ENCODE measurements at regions of chr5 and their contacts with region 1.

Region 1: GRCh38 chr5:65102828-65103711 is 334.3 kb downstream of the CWC27 start:
- DNase-seq: peak; percentile 51 to 71
- ATAC-seq: peak; percentile 57 to 86 (median 73)
- H3K4me3 ChIP-seq: peak overlapping the region; percentile 81
- H3K27ac ChIP-seq: peak overlapping the region; percentile 74
- H3K4me1 ChIP-seq: peaks cover 4% of the 10 kb centered on the region
- H3K27me3 ChIP-seq: no peaks in the 10 kb centered on the region
- CTCF ChIP-seq: peak; percentile 25

Region 2: DNA sequence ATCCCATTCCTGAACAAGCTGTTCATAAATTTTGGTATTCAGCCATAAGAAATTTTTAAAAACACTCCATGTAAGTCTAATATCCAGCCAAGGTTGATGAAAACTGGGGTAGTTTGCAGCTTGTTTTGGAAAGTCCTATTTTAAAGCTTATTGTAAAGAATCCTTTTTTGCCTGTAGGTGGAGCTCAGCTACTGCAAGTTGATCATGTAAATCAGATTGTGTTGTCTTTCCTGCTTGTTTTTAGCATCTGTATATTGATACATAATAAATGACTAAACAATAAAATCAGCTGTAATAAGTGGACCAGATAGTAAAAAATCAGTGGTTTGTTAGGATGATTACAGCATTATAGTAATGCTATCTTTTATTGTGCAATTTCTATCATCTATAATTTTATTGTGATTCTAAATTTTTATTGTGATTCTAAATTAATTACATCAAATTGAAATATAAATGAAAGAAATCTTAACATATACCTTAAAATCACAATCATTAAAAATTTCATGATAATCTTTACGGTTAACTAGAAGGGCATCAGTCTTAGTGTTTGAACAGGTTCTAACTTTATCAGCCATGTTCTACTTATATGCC is 291.9 kb before region 1 on chr5:
- intact Hi-C with region 1: loop called (anchors 5 to 10 kb)
- DNase-seq: no peak
- ATAC-seq: peak in 2 of 4 donors; percentile 55 to 81
- H3K4me3 ChIP-seq: no peak overlapping the region
- H3K27ac ChIP-seq: no peak overlapping the region
- H3K4me1 ChIP-seq: no peaks in the 10 kb centered on the region
- H3K27me3 ChIP-seq: no peaks in the 10 kb centered on the region
- CTCF ChIP-seq: peak; percentile 77

Region 3: DNA sequence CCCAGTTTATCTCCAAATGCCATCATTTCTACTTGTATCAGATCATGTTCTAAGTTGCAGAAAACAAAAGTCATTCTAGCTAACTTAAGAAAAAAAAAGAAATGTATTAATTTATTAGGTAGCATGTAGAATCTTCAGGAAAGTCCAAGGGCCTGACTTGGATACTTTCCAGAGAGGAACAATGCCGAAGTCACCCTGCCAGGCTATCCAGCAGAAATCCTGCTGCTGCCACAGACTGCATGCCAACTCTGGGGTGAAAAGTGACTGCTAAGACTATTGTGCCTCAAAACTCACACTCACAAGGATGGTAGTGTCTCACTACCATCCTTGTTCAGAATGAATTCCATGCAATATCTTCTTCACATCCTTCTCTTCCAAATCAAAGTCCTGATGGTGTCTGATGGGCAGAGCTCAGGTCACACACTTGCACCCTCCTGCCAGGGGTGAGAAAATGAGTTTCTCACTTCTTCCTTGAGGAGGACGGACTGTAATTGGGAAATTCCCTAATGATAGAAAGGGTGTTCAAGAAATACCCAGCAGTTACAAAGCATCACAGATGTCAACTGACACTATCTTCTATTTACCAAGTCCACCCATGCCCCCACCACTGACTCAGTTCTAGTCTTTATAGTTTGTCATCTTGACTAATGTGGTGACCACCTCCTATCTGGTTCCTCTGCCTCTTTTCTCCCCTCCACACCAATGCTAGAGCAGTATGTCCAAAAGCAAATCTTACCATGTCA is 55.0 kb before region 1 on chr5:
- intact Hi-C with region 1: no loop called
- DNase-seq: no peak
- ATAC-seq: no peak
- H3K4me3 ChIP-seq: no peak overlapping the region
- H3K27ac ChIP-seq: no peak overlapping the region
- H3K4me1 ChIP-seq: no peaks in the 10 kb centered on the region
- H3K27me3 ChIP-seq: no peaks in the 10 kb centered on the region
- CTCF ChIP-seq: no peak